ENCODE measurements at regions of chr11 and their contacts with region 1.

Region 1: GRCh38 chr11:130314750-130315285 is at the start of gene ZBTB44:
- DNase-seq: peak; percentile 96 to 98
- ATAC-seq: peak; percentile 98
- H3K4me3 ChIP-seq: peak within 1 kb of the TSS; percentile 64 to 89
- H3K27ac ChIP-seq: peak within 1 kb of the TSS; percentile 52 to 83
- H3K4me1 ChIP-seq: no peaks in the 10 kb centered on the region
- H3K27me3 ChIP-seq: no peaks in the 10 kb centered on the region
- total RNA-seq, gene ZBTB44: 37.8 to 50.2 TPM

Region 2: DNA sequence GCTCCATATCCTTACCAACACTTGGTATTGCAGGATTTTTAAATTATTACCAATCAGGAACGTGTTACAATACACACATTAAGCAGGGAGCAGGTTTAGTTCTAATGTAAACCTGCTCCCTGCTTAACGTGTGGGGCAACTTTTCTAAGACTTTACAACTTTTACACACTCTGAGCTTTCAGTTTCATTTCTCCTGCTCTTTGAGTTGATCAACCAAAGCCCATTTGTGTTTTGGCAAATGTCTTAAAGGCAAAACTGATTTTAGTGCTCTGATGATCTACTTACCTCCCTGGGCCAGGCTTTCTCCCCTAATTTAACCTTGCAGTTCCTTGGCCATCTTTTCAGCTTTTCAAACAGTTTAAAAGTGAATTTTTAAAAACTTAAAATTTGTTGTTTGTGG is 71.0 kb before region 1 on chr11:
- intact Hi-C with region 1: loop called in 1 of 2 experiments (anchors 10 kb)
- DNase-seq: no peak
- ATAC-seq: no peak
- H3K4me3 ChIP-seq: no peak overlapping the region
- H3K27ac ChIP-seq: no peak overlapping the region
- H3K4me1 ChIP-seq: peaks cover 0 to 8% of the 10 kb centered on the region in 2 donors
- H3K27me3 ChIP-seq: no peaks in the 10 kb centered on the region

Region 3: GRCh38 chr11:130420478-130421198 is 105.8 kb after region 1 on chr11:
- intact Hi-C with region 1: loop called in 1 of 2 experiments (anchors 5 kb)
- DNase-seq: peak in 1 of 2 donors; percentile 46
- ATAC-seq: no peak
- H3K4me3 ChIP-seq: no peak overlapping the region
- H3K27ac ChIP-seq: no peak overlapping the region
- H3K4me1 ChIP-seq: no peaks in the 10 kb centered on the region
- H3K27me3 ChIP-seq: no peaks in the 10 kb centered on the region

Region 4: GRCh38 chr11:130749216-130749615 is 434.4 kb after region 1 on chr11:
- intact Hi-C with region 1: no loop called
- DNase-seq: no peak
- ATAC-seq: no peak
- H3K4me3 ChIP-seq: no peak overlapping the region
- H3K27ac ChIP-seq: no peak overlapping the region
- H3K4me1 ChIP-seq: no peaks in the 10 kb centered on the region
- H3K27me3 ChIP-seq: no peaks in the 10 kb centered on the region

Region 5: DNA sequence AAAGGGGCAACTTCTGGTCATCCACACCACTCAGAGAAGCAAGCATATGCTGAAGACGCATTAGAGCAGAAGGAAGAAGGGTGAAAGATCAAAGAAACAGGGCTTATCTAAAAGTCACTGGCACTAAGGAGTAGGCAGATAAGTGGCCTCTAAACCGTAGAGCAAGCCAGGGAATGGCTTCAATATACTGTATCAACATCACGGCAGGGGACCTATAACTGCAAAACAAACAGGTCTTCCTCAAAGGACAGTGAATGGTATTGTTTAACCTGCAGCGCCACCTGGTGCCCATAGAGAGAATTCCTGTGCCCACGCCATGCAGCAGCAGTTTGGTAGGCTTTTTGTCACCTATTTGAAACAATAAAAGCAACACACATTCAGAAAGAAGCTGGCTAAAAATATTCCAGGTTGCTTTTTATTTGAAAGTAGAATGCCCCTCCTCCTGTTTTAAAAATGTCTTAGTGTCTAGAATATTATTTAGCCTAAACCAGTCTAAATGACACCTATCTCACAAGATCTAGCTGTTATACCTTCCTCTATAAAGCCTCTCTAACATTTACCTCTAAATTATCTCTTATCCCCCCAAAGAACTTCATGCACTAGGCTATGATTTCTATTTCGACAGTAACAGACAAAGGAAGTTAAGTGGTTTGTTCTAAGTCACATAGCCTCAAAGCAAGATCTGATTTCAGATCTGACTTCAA is 579.7 kb after region 1 on chr11:
- intact Hi-C with region 1: loop called in 1 of 2 experiments (anchors 1 kb)
- DNase-seq: peak; percentile 70 to 87
- ATAC-seq: peak; percentile 73
- H3K4me3 ChIP-seq: no peak overlapping the region
- H3K27ac ChIP-seq: peak overlapping the region; percentile 16 to 90
- H3K4me1 ChIP-seq: peaks cover 0 to 2% of the 10 kb centered on the region in 2 donors
- H3K27me3 ChIP-seq: no peaks in the 10 kb centered on the region

Measured in aorta (tissue), 5 donors.